GM10248 (cell line): ENCODE measurements at regions of chr5 and their contacts with region 1.

Region 1: DNA sequence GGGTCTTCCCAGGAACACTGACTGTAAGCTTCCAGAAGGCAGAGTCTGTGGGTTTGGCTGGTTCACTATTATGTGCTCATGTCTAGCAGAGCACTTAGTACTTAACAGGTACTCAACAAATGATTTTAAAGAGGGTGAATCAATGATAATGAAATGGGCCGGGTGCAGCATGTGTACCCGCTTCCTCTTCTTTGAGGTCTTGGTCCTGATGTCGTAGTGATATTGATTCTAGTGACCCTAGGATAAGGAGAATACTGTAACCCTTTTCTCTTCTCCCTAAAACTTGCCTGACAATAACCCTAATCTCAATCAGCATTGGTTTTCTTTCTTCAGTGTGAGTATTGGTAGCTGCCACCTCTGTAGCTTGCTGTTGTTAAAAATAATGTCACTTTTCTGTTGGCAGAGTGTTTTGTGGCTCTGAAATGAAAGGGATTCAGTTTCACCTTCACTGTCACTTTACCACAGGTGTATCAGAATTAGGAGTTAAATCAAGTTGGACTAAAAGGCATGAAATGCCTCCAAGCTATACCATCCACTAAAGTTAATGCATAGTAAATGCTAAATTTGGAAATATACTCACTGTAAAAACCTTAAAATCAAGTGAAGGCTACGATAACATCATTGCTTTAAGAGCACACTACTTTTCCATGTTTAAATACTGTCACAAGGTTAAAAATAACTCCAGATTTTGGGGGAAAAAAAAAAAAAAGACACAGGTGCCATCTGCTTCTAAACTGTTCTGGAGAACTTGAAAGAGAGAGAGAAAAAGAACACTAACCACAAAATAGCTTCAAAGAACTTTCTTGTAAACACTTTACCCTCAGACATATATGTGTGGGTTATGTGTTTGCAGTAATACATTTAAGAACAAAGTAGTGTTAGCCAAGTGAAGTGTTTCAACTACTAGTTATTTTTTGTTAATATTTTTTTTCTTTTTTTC is 6.0 kb downstream of the CAMK4 start:
- DNase-seq: no peak
- CTCF ChIP-seq: no peak

Region 2: GRCh38 chr5:111242606-111243005 is 12.5 kb after region 1 on chr5:
- CTCF ChIA-PET with region 1: interaction called, 78 read pairs
- POLR2A ChIA-PET with region 1: no interaction called
- DNase-seq: no peak
- CTCF ChIP-seq: no peak

Region 3: DNA sequence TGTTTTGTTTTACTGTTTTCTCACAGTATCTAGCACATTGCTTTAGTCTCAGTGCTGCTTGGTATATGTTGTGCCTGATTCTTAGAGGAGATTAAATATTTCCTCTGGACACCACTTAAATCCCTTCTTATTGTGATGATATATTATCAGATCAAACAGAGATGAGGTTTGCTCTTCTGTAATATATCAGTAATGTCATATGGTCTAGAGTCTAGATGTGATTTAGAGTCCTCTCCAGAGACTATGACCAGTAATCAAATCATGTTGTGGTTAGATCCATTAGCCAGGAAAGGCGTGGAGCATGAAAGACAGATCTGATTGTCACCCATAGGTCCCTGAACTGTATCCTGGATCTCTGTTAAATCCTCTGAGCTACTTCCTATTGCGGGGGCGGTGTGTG is 18.4 kb after region 1 on chr5:
- CTCF ChIA-PET with region 1: interaction called, 39 read pairs
- POLR2A ChIA-PET with region 1: no interaction called
- DNase-seq: no peak
- CTCF ChIP-seq: no peak